ENCODE measurements at regions of chr18 and their contacts with region 1.

Region 1: GRCh38 chr18:36366994-36367839 is 69.7 kb downstream of the FHOD3 start:
- DNase-seq: peak; percentile 82
- ATAC-seq: peak; percentile 80
- H3K4me3 ChIP-seq: no peak overlapping the region
- H3K27ac ChIP-seq: peak overlapping the region; percentile 72
- H3K4me1 ChIP-seq: peaks cover 14% of the 10 kb centered on the region
- H3K27me3 ChIP-seq: no peaks in the 10 kb centered on the region
- CTCF ChIP-seq: no peak
- EP300 ChIP-seq: peak in 1 of 2 experiments; percentile 30; a peak in 1 of 4 replicates
- POLR2A ChIP-seq: no peak
- RAD21 ChIP-seq: no peak

Region 2: GRCh38 chr18:36309436-36310391 is 57.5 kb before region 1 on chr18:
- CTCF ChIA-PET with region 1: interaction called, 3 read pairs
- POLR2A ChIA-PET with region 1: interaction called, 8 read pairs
- RAD21 ChIA-PET with region 1: interaction called, 203 read pairs
- SMC1A ChIA-PET with region 1: interaction called, 212 read pairs
- in situ Hi-C with region 1: no loop called
- intact Hi-C with region 1: no loop called
- DNase-seq: no peak
- ATAC-seq: peak; percentile 34
- H3K4me3 ChIP-seq: no peak overlapping the region
- H3K27ac ChIP-seq: no peak overlapping the region
- H3K4me1 ChIP-seq: no peaks in the 10 kb centered on the region
- H3K27me3 ChIP-seq: 0 out of 4 replicates have a peak, but pooled peaks cover 0 to under 1% of the 10 kb centered on the region in 2 experiments
- CTCF ChIP-seq: no peak
- EP300 ChIP-seq: no peak
- POLR2A ChIP-seq: no peak
- RAD21 ChIP-seq: no peak

Region 3: DNA sequence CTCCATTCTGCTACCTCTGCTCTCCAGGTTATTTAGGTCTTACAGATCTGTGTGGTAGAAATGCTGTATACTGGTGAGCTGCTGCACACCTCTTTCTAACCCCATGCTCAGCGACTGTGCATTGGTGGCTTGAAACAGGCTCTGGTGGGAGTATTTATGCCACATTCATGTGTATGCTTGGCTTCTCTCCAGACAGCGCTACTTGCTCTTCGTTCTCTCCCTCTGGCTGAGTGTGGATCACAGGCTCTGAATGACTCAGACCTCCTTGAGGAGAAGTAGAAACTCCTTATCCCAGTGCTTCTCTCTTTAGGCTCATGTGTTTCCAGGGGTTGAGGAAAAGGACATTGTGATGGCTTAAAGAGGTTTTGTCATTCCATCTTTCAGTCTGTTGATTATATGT is 14.8 kb before region 1 on chr18:
- CTCF ChIA-PET with region 1: interaction called, 8 read pairs
- POLR2A ChIA-PET with region 1: interaction called, 11 read pairs
- RAD21 ChIA-PET with region 1: interaction called, 12 read pairs
- SMC1A ChIA-PET with region 1: interaction called, 84 read pairs
- in situ Hi-C with region 1: no loop called
- intact Hi-C with region 1: loop called (anchors 2 kb)
- DNase-seq: no peak
- ATAC-seq: no peak
- H3K4me3 ChIP-seq: no peak overlapping the region
- H3K27ac ChIP-seq: no peak overlapping the region
- H3K4me1 ChIP-seq: peaks cover 5% of the 10 kb centered on the region; the same call in 1 of the 2 replicates
- H3K27me3 ChIP-seq: no peaks in the 10 kb centered on the region
- CTCF ChIP-seq: no peak
- EP300 ChIP-seq: no peak
- POLR2A ChIP-seq: no peak
- RAD21 ChIP-seq: no peak

Region 4: DNA sequence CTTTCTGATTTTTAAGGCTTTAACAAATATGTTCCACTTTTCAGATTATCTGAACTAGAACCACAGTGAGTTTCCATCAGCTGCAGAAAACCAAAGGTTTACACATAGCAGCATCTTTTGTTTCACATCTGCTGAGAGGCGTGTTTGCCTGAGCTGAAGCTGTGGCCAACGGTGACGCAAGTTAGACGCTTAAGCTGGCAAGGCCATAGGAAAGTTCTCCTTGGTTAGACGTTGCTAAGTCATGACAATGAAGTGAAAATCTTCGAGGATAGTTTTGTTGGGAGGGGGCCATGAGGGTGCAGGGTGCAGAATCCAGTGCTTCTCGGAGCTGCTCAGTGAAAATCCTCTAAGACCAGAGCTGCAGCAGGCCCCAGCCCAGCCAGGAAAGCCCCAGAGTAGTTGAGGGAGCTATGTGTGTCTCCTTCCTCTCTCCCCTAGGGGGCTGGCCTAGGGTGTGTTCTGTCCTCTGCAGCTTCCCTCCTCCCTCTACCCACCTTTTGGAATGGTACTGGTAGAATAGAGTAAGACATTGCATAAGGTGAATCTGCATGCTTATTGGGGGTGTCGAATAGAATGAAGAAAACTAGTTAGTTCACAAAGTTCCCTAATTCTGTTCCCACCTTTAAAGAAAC is 35.7 kb after region 1 on chr18:
- CTCF ChIA-PET with region 1: interaction called, 6 read pairs
- POLR2A ChIA-PET with region 1: interaction called, 8 read pairs
- RAD21 ChIA-PET with region 1: interaction called, 19 read pairs
- SMC1A ChIA-PET with region 1: interaction called, 1,180 read pairs
- in situ Hi-C with region 1: no loop called
- intact Hi-C with region 1: no loop called
- DNase-seq: no peak
- ATAC-seq: peak; percentile 70
- H3K4me3 ChIP-seq: no peak overlapping the region
- H3K27ac ChIP-seq: no peak overlapping the region
- H3K4me1 ChIP-seq: no peaks in the 10 kb centered on the region
- H3K27me3 ChIP-seq: no peaks in the 10 kb centered on the region
- CTCF ChIP-seq: peak in 2 of 3 experiments; percentile 3 to 25; a peak in 3 of 6 replicates
- EP300 ChIP-seq: no peak
- POLR2A ChIP-seq: no peak
- RAD21 ChIP-seq: no peak

Region 5: DNA sequence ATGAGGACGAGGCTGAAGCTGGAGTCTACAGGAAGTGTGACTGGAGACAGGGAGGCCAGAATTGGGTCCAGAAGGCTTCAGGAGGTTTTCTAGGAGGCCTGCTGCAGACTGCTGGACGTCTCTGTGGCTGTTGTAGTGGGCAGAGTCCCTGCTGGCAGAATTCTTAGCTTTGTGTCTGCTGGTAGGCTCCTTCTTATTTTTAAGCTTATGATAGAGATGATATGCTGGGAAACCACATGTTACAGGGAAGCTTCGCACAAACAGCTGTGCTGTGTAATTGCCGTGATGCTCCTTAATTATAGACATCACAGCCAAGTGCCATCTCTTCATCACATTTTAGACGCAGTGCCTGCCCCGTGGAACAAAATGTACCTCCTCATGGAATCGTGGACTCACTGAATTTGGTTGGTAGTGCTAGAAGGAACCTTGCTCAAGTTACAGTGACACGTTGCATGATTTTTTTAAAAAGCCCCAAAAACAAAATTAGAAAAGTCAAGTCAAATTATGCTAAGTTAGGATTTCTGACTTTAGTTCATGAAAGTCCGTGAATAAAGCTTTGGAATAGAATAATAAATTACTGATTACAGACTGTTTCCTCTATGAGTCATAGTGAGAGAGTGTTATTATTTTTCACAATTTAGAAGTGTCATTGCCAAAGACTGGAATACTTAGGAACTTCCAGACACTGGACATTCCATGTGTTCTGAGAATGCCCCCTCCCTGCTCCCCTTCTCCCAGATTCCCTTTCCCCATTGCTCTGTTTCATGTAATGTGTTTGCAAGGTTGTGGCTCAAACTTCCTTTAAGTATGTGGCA is 74.4 kb after region 1 on chr18:
- CTCF ChIA-PET with region 1: no interaction called
- POLR2A ChIA-PET with region 1: interaction called, 3 read pairs
- RAD21 ChIA-PET with region 1: interaction called, 10 read pairs
- SMC1A ChIA-PET with region 1: interaction called, 6 read pairs
- in situ Hi-C with region 1: no loop called
- intact Hi-C with region 1: no loop called
- DNase-seq: no peak
- ATAC-seq: peak; percentile 10; the same call in 2 of the 3 replicates
- H3K4me3 ChIP-seq: no peak overlapping the region
- H3K27ac ChIP-seq: no peak overlapping the region
- H3K4me1 ChIP-seq: no peaks in the 10 kb centered on the region
- H3K27me3 ChIP-seq: no peaks in the 10 kb centered on the region
- CTCF ChIP-seq: no peak
- EP300 ChIP-seq: peak in 1 of 2 experiments; percentile 16; a peak in 1 of 4 replicates
- POLR2A ChIP-seq: no peak
- RAD21 ChIP-seq: no peak

Region 6: DNA sequence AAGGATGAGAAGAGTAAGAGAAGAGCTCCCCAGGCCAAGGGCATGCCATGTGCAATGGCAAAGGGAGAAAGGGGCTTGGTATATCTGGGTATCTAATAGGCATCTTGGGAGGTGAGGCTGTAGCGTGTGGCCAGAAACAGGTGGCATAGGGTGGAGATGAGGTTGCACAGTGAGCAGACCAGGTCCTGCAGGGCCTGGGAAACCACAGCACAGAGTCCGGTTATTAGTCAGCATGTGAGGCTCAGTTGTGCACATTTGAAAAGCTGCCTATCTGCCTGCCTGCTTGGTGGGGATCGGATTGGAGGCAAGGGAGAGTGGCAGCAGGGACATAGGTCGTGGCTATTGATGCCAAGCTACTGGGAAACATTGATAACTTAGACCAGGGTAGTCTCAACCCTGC is 271.0 kb after region 1 on chr18:
- CTCF ChIA-PET with region 1: no interaction called
- POLR2A ChIA-PET with region 1: interaction called, 5 read pairs
- RAD21 ChIA-PET with region 1: interaction called, 3 read pairs
- SMC1A ChIA-PET with region 1: no interaction called
- in situ Hi-C with region 1: no loop called
- intact Hi-C with region 1: loop called (anchors 2 kb)
- DNase-seq: peak; percentile 92
- ATAC-seq: peak; percentile 88
- H3K4me3 ChIP-seq: no peak overlapping the region
- H3K27ac ChIP-seq: peak overlapping the region; percentile 94
- H3K4me1 ChIP-seq: peaks cover 58% of the 10 kb centered on the region
- H3K27me3 ChIP-seq: no peaks in the 10 kb centered on the region
- CTCF ChIP-seq: no peak
- EP300 ChIP-seq: peak in 1 of 2 experiments; percentile 83; a peak in 2 of 4 replicates
- POLR2A ChIP-seq: no peak
- RAD21 ChIP-seq: no peak